ENCODE measurements at regions of chr9 and their contacts with region 1.

Region 1: DNA sequence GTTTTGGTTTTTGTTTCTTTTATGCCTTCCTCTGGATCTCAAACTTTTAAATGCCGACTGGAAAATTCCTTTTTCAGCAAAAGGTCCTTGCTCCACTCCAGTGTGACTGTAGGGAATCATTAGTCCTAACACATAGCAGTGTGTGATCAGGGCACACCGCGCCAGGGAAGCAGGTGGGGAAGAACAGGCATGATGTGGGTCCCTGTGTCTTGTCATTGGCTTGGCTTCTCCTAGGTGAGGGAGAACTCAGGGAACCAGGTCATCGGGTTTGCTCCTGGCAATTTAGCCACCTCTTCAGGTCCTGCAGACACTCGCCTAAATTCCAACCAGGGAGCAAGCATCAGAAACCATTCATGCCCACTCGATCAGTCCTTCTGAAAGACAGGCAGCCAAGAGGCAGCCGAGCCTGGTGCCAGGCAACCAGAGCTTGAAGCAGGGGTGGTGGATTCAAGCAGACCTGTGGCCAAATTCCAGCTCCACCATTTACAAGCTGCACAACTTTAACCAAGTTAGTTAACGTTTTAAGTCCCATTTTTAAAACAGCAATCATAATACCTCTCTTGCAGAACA is 514.2 kb downstream of the BNC2 start:
- DNase-seq: no peak
- H3K4me3 ChIP-seq: no peak overlapping the region
- H3K27ac ChIP-seq: no peak overlapping the region
- H3K4me1 ChIP-seq: no peaks in the 10 kb centered on the region
- H3K27me3 ChIP-seq: no peaks in the 10 kb centered on the region
- CTCF ChIP-seq: no peak

Region 2: GRCh38 chr9:16425562-16426231 is 69.4 kb after region 1 on chr9:
- CTCF ChIA-PET with region 1: no interaction called
- dilution Hi-C with region 1: loop called (anchors 5 kb)
- in situ Hi-C with region 1: no loop called
- intact Hi-C with region 1: no loop called
- DNase-seq: no peak
- H3K4me3 ChIP-seq: no peak overlapping the region
- H3K27ac ChIP-seq: no peak overlapping the region
- H3K4me1 ChIP-seq: peaks cover 6% of the 10 kb centered on the region
- H3K27me3 ChIP-seq: peaks cover 2% of the 10 kb centered on the region
- CTCF ChIP-seq: no peak

Region 3: DNA sequence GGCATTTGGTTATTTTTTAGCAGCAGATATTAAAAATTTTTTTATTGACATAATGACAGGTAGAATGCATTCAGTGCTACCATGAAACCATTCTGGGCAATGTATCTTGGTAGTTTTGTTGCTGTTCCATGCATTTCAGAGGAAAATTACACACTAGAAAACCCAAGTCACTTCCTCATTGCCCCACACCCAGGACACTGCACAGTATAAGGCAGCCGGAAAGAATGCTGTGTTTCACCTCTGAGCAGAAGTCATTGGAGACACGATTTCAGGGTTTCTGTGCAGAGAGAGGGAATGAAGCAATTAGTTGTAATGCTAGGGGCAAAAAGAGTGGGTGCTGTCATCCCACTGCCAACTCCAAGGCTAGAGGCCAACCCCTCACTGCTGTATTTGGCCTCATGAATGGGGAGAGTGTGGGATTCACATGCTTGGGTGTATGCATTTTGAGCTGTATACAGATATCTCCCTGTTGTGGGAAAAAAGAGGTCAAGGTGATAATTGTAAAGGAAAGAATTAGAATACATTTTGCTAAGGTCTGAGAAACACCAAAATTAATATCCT is 223.7 kb after region 1 on chr9:
- CTCF ChIA-PET with region 1: no interaction called
- dilution Hi-C with region 1: no loop called
- in situ Hi-C with region 1: no loop called
- intact Hi-C with region 1: no loop called
- DNase-seq: no peak
- H3K4me3 ChIP-seq: no peak overlapping the region
- H3K27ac ChIP-seq: no peak overlapping the region
- H3K4me1 ChIP-seq: no peaks in the 10 kb centered on the region
- H3K27me3 ChIP-seq: no peaks in the 10 kb centered on the region
- CTCF ChIP-seq: no peak

Region 4: DNA sequence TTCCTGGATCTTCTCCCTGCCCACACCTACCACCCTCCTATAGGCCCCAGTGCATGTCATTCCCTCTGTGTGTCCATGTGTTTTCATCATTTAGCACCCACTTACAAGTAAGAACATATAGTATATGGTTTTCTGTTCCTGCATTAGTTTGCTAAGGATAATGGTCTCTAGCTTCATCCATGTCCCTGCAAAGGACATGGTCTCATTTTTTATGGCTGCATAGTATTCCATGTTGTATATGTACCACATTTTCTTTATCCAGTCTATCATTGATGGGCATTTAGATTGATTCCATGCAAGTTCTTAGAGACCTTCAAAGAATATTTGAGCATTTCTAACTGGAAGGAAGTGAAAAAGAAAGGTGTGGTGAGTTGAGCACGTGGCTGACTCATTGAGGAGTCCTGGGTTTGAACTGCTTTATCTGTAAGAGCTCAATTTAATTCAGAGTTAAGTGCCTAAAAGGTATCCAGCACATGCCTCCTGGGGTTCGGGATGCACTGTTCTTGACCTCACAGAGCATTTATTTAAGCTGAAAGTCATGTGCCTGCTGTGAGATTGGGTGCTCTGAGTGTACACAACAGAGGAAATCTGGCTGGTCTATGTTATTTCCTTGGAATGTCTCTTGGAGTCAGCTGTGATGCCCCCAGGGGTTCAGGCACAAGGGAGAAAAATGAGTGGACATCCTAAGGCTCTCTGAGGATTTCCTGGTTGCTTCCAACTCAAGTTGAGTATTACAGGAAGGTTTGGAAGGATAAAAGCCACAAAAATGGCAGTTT is 1279.0 kb after region 1 on chr9:
- CTCF ChIA-PET with region 1: no interaction called
- dilution Hi-C with region 1: no loop called
- in situ Hi-C with region 1: no loop called
- intact Hi-C with region 1: no loop called
- DNase-seq: no peak
- H3K4me3 ChIP-seq: no peak overlapping the region
- H3K27ac ChIP-seq: no peak overlapping the region
- H3K4me1 ChIP-seq: no peaks in the 10 kb centered on the region
- H3K27me3 ChIP-seq: no peaks in the 10 kb centered on the region
- CTCF ChIP-seq: no peak